Dorsolateral prefrontal cortex (tissue), 120 donors: ENCODE measurements at regions of chr16 and their contacts with region 1.

Region 1: GRCh38 chr16:30378236-30379204 is 3.8 kb downstream of the SEPTIN1 start:
- DNase-seq: peak; percentile 99 to 100 (median 100)
- H3K4me3 ChIP-seq: peak overlapping the region; percentile 56 to 99 (median 91)
- H3K27ac ChIP-seq: peak overlapping the region; percentile 94 to 100 (median 100)
- H3K27me3 ChIP-seq: no peaks in the 10 kb centered on the region
- CTCF ChIP-seq: peak in 27 of 56 donors; percentile 5 to 50 (median 25)

Region 2: GRCh38 chr16:30335598-30336474 is 42.7 kb before region 1 on chr16:
- intact Hi-C with region 1: loop called (anchors 5 kb)
- DNase-seq: peak in 1 of 10 donors; percentile 23
- H3K4me3 ChIP-seq: peak overlapping the region; percentile 39 to 80 (median 70)
- H3K27ac ChIP-seq: peak overlapping the region in 58 of 59 donors; percentile 7 to 93 (median 82)
- H3K27me3 ChIP-seq: no peaks in the 10 kb centered on the region
- CTCF ChIP-seq: peak in 1 of 56 donors; percentile 3

Region 3: DNA sequence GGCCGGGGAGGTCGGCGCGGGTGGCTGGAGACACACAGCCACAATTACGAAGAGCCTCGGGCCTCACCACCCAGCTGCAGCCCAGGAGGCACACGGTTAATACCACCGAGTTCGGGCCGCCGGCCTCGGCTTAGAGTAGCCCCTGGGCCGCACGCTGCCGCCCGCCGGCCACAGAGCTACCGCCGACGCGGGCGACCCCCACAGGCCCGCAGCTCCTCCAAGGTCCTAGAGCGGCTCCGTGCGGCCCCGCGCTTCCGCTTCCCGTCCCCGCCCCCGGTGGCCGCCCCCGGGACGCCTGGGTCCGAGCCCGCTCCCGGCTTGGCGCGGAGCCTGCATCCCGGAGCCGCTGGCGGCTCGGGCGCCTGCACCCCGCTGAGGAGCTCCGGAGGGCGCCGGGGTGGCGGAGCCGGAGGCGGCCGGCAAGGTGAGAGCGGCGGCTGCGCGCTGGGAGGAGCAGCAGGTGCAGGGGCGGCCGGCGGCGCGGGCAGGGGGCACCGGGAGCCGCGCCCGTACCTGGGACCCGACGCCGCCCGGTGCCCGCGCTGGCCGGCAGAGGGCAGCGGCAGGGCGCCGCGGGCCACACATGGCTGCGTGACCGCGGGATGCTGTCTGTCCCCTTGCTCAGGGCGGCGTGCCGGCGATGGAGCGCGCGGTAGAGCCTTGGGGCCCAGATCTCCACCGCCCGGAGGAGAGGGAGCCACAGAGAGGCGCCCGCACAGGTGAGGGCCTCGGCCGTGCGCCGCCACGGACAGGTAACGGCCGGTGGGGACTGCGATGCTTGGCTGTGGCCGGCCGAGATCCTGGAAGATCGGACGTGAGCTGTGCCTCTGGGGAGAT is 16.9 kb after region 1 on chr16 and contains the start of gene ZNF48:
- intact Hi-C with region 1: loop called (anchors 2 kb)
- DNase-seq: peak; percentile 78 to 95 (median 91)
- H3K4me3 ChIP-seq: peak within 1 kb of the TSS; percentile 64 to 99 (median 88)
- H3K27ac ChIP-seq: peak within 1 kb of the TSS; percentile 57 to 94 (median 83)
- H3K27me3 ChIP-seq: no peaks in the 10 kb centered on the region
- CTCF ChIP-seq: peak in 43 of 56 donors; percentile 5 to 73 (median 38)
- total RNA-seq, gene ZNF48: 10.1 to 24.9 (median 16.6) TPM